CD4-positive, alpha-beta memory T cell (primary cell): ENCODE measurements at regions of chr1 and their contacts with region 1.

Region 1: DNA sequence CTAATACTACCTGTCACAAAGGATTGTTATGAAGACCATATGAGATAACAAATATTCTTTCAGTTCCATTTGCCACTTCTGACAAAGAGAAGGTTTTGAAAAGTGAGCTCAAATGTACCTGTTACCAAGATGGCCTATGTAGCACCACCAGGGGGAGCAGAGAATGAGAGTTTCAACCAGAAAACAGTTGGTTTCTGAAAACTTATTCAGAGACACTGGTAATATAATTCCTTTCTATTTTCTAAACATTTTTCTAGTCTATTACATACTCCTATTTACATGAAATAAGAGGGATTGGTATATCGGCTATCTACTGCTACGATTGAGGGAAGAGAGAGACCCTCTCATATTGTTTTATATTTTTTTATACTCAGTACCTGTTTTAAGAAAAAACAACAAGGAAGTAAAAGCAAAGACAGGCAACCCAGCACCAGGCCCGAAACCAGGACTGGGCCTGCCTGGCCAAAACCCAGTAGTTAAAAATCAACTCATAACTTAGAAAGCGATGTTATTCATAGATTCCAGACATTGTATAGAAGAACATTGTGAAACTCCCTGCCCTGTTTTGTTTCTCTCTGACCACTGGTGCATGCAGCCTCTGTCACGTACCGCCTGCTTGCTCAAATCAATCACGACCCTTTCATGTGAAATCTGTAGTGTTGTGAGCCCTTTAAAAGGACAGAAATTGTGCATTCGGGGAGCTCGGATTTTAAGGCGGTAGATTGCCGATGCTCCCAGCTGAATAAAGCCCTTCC is 48.3 kb downstream of the IL23R start:
- DNase-seq: peak; percentile 41 to 53 (median 45)
- H3K4me3 ChIP-seq: no peak overlapping the region
- H3K4me3 Mint-ChIP-seq: no peak overlapping the region
- H3K27ac ChIP-seq: no peak overlapping the region
- H3K27ac Mint-ChIP-seq: peak overlapping the region in 1 of 7 donors; percentile 0
- H3K4me1 ChIP-seq: peaks cover 14% of the 10 kb centered on the region
- H3K4me1 Mint-ChIP-seq: peaks cover 10 to 18% (median 14%) of the 10 kb centered on the region in 4 donors
- H3K27me3 ChIP-seq: no peaks in the 10 kb centered on the region
- H3K27me3 Mint-ChIP-seq: no peaks in the 10 kb centered on the region

Region 2: DNA sequence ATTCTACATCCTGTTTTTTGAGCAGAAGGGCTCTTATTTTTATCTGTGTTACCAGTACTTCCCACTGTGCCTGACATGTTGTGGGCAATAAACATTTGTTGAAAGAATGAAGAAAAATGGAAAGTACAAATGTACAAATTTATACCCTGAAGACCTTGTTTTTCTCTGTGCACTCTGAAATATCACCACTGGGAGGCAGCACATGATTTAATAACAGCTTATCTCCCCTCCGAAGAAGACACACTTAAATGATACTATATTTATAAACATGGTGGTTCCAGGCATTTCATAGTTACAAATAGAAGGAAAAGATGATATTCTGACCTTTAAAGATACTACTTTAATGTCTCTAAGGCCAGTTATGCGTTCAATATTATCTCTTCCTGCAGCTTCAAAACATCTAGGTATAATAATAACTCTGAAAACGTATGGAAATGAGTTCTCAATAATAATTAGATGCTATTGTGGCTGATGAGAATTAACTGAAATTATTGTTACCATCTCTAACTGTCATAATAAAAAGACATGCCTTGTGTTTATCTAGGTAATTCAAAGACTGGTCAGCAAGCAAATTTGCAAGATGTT is 449.5 kb before region 1 on chr1:
- CTCF ChIA-PET with region 1: interaction called, 95 read pairs
- POLR2A ChIA-PET with region 1: no interaction called
- intact Hi-C with region 1: loop called (anchors 1 kb)
- DNase-seq: peak; percentile 53 to 59 (median 54)
- H3K4me3 ChIP-seq: no peak overlapping the region
- H3K4me3 Mint-ChIP-seq: no peak overlapping the region
- H3K27ac ChIP-seq: no peak overlapping the region
- H3K27ac Mint-ChIP-seq: no peak overlapping the region
- H3K4me1 ChIP-seq: peaks cover 13% of the 10 kb centered on the region
- H3K4me1 Mint-ChIP-seq: peaks cover 13 to 17% (median 15%) of the 10 kb centered on the region in 4 donors
- H3K27me3 ChIP-seq: no peaks in the 10 kb centered on the region
- H3K27me3 Mint-ChIP-seq: no peaks in the 10 kb centered on the region

Region 3: GRCh38 chr1:67142931-67143330 is 71.7 kb before region 1 on chr1:
- CTCF ChIA-PET with region 1: interaction called, 212 read pairs
- POLR2A ChIA-PET with region 1: interaction called, 5 read pairs
- intact Hi-C with region 1: loop called (anchors 1 kb)
- DNase-seq: peak in 3 of 5 donors; percentile 29 to 39 (median 36)
- H3K4me3 ChIP-seq: no peak overlapping the region
- H3K4me3 Mint-ChIP-seq: peak overlapping the region in 6 of 8 donors; percentile 28 to 75 (median 42)
- H3K27ac ChIP-seq: no peak overlapping the region
- H3K27ac Mint-ChIP-seq: peak overlapping the region in 6 of 7 donors; percentile 8 to 90 (median 40)
- H3K4me1 ChIP-seq: peaks cover 18% of the 10 kb centered on the region
- H3K4me1 Mint-ChIP-seq: peaks cover 25 to 47% (median 34%) of the 10 kb centered on the region in 4 donors
- H3K27me3 ChIP-seq: no peaks in the 10 kb centered on the region
- H3K27me3 Mint-ChIP-seq: no peaks in the 10 kb centered on the region

Region 4: DNA sequence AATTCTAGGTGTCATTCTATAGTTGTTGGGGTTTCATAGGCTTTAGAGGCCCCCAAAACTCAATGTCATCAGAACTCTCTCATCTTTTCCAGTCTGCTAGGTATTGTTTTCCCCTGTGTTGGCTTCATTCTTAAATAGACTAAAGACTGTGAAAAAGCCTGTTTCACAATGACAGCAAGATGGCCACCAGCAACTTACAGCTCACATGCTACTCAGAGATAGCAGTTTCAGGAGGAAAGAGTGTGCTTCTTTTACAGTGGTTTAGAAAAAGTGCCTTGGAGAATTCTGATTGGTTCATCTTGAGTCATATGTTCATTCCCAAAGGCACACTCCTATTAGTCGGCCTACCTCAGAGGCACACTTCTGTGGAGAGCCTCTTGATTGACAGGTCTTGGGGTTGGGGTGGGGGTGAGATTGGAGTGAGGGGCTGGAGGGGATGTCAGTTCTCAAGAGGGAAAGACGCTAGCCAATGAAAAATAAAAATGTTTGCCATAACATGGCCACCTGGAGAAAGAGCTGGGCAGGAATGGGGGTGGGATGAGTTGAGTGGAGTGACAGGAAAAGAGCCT is 39.8 kb before region 1 on chr1:
- CTCF ChIA-PET with region 1: interaction called, 58 read pairs
- POLR2A ChIA-PET with region 1: no interaction called
- intact Hi-C with region 1: loop called (anchors 5 kb)
- DNase-seq: no peak
- H3K4me3 ChIP-seq: no peak overlapping the region
- H3K4me3 Mint-ChIP-seq: peak overlapping the region in 2 of 8 donors; percentile 21 to 40
- H3K27ac ChIP-seq: no peak overlapping the region
- H3K27ac Mint-ChIP-seq: peak overlapping the region in 1 of 7 donors; percentile 52
- H3K4me1 ChIP-seq: peaks cover 40% of the 10 kb centered on the region
- H3K4me1 Mint-ChIP-seq: peaks cover 30 to 59% (median 44%) of the 10 kb centered on the region in 4 donors
- H3K27me3 ChIP-seq: no peaks in the 10 kb centered on the region
- H3K27me3 Mint-ChIP-seq: peaks cover 5 to 7% of the 10 kb centered on the region in 2 donors

Region 5: DNA sequence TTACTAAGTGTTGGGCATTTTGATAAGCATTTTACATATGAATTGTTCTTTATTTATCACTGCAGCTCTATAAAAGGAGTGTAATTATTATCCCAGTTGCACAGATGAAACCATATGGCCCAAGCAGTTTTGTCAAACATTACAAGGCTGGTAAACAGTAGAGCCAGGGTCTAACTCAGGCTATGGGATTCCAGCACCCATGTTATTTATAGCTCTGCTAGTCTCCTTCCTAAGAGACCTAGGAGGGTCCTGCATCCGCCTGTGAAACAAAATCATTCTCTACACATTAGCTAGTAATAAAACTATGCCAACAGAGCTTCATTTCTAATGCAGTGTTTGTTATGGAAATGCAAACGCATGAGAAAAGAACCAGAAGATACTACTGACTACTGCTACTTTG is 10.3 kb after region 1 on chr1:
- CTCF ChIA-PET with region 1: interaction called, 26 read pairs
- POLR2A ChIA-PET with region 1: no interaction called
- intact Hi-C with region 1: no loop called
- DNase-seq: no peak
- H3K4me3 ChIP-seq: no peak overlapping the region
- H3K4me3 Mint-ChIP-seq: no peak overlapping the region
- H3K27ac ChIP-seq: no peak overlapping the region
- H3K27ac Mint-ChIP-seq: no peak overlapping the region
- H3K4me1 ChIP-seq: no peaks in the 10 kb centered on the region
- H3K4me1 Mint-ChIP-seq: peaks cover 0 to 4% (median 2%) of the 10 kb centered on the region in 4 donors
- H3K27me3 ChIP-seq: no peaks in the 10 kb centered on the region
- H3K27me3 Mint-ChIP-seq: no peaks in the 10 kb centered on the region

Region 6: GRCh38 chr1:67500413-67500959 is 285.9 kb after region 1 on chr1:
- CTCF ChIA-PET with region 1: interaction called, 144 read pairs
- POLR2A ChIA-PET with region 1: no interaction called
- intact Hi-C with region 1: loop called (anchors 1 kb)
- DNase-seq: peak; percentile 77 to 85 (median 81)
- H3K4me3 ChIP-seq: no peak overlapping the region
- H3K4me3 Mint-ChIP-seq: no peak overlapping the region
- H3K27ac ChIP-seq: no peak overlapping the region
- H3K27ac Mint-ChIP-seq: peak overlapping the region in 1 of 7 donors; percentile 29
- H3K4me1 ChIP-seq: peaks cover 2% of the 10 kb centered on the region
- H3K4me1 Mint-ChIP-seq: peaks cover 3 to 5% (median 4%) of the 10 kb centered on the region in 4 donors
- H3K27me3 ChIP-seq: no peaks in the 10 kb centered on the region
- H3K27me3 Mint-ChIP-seq: peaks cover 1 to 3% of the 10 kb centered on the region in 2 donors